ENCODE measurements at regions of chr6 and their contacts with region 1.

Region 1: DNA sequence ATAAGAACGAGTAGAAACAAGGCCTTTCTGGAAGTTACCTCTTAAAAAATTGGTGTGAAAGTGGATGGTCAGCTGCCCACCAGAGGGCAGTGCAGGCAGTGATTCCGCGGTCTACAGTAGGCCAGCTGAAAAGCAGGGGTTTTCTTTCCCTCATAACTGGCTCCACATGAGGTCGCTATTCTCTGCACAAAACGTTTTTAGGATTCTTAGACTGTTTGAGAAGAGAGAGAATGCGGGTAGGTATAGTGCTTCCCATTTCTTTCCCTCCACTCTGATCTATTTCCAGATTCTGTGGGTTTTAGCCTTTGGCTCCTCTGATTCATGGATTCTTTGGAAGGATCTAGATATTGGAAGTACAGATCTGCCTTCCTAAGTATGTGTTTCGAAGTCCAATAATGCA is 14.2 kb downstream of the FIG4 start:
- DNase-seq: peak; percentile 78
- ATAC-seq: peak; percentile 99
- H3K4me3 ChIP-seq: no peak overlapping the region
- H3K27ac ChIP-seq: no peak overlapping the region
- H3K4me1 ChIP-seq: peaks cover 0 to 3% of the 10 kb centered on the region in 2 experiments; a peak in 1 of 4 replicates
- H3K27me3 ChIP-seq: no peaks in the 10 kb centered on the region
- CTCF ChIP-seq: peak; percentile 92 to 100 (median 100)
- POLR2A ChIP-seq: no peak
- RAD21 ChIP-seq: peak; percentile 100

Region 2: GRCh38 chr6:109526905-109527628 is 178.2 kb before region 1 on chr6:
- CTCF ChIA-PET with region 1: no interaction called
- POLR2A ChIA-PET with region 1: no interaction called
- RAD21 ChIA-PET with region 1: no interaction called
- intact Hi-C with region 1: loop called (anchors 1 kb)
- DNase-seq: peak; percentile 69
- ATAC-seq: peak; percentile 96
- H3K4me3 ChIP-seq: no peak overlapping the region
- H3K27ac ChIP-seq: no peak overlapping the region
- H3K4me1 ChIP-seq: no peaks in the 10 kb centered on the region
- H3K27me3 ChIP-seq: no peaks in the 10 kb centered on the region
- CTCF ChIP-seq: peak; percentile 58 to 80 (median 78)
- POLR2A ChIP-seq: no peak
- RAD21 ChIP-seq: peak; percentile 86

Region 3: GRCh38 chr6:109892436-109893435 is 187.5 kb after region 1 on chr6:
- CTCF ChIA-PET with region 1: interaction called, 3 read pairs
- POLR2A ChIA-PET with region 1: no interaction called
- RAD21 ChIA-PET with region 1: no interaction called
- intact Hi-C with region 1: loop called (anchors 2 kb)
- DNase-seq: peak; percentile 82
- ATAC-seq: peak; percentile 84
- H3K4me3 ChIP-seq: peak overlapping the region; percentile 20 to 35
- H3K27ac ChIP-seq: peak overlapping the region; percentile 40
- H3K4me1 ChIP-seq: peaks cover 14 to 32% of the 10 kb centered on the region in 2 experiments
- H3K27me3 ChIP-seq: no peaks in the 10 kb centered on the region
- CTCF ChIP-seq: peak; percentile 53 to 73 (median 60)
- POLR2A ChIP-seq: no peak
- RAD21 ChIP-seq: peak; percentile 85

Region 4: GRCh38 chr6:109998159-109998785 is 293.0 kb after region 1 on chr6:
- CTCF ChIA-PET with region 1: no interaction called
- POLR2A ChIA-PET with region 1: no interaction called
- RAD21 ChIA-PET with region 1: no interaction called
- intact Hi-C with region 1: no loop called
- DNase-seq: no peak
- ATAC-seq: no peak
- H3K4me3 ChIP-seq: no peak overlapping the region
- H3K27ac ChIP-seq: no peak overlapping the region
- H3K4me1 ChIP-seq: no peaks in the 10 kb centered on the region
- H3K27me3 ChIP-seq: peaks cover 18% of the 10 kb centered on the region
- CTCF ChIP-seq: no peak
- POLR2A ChIP-seq: no peak
- RAD21 ChIP-seq: no peak

Region 5: DNA sequence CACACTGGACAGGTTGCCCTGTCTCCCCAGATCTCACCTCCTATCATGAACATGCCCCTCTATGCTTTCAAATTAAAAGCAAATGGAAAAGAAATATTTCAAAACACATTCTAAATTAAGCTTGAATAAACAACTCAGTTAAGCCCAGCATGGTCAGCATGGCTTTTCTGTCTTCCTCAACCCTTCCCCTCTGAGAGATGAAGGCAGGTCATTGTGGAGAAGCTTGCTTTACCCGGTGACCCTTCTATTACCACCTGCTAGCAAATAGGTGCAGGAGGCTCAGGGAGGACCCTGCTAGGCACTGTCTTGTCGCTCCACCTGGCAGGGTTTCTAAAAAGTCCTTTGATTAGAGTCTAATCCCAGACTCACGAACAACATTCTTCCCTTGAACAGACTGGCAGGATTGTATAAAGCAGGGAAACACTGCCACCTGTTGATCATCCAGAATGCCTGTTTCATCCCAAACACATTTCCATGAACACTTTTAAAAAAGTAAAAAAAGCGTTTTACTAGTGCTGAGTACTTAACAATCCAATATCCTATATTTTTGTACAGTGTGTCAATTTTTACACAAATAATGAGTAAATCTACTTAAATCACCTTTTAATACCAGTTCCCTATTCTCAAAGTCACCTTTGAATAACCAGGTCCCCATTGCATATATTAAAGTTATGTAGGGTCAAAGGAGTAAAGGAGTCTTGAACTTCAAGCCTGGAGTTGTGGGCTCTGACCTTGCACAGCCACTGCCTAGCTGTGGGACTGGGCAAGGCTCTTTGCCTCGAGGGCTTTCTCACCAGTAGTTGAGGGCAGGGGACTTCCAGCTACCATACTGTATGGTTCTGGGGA is 348.4 kb after region 1 on chr6:
- CTCF ChIA-PET with region 1: interaction called, 11 read pairs
- POLR2A ChIA-PET with region 1: no interaction called
- RAD21 ChIA-PET with region 1: no interaction called
- intact Hi-C with region 1: loop called (anchors 1 kb)
- DNase-seq: peak; percentile 40
- ATAC-seq: peak; percentile 81
- H3K4me3 ChIP-seq: no peak overlapping the region
- H3K27ac ChIP-seq: no peak overlapping the region
- H3K4me1 ChIP-seq: no peaks in the 10 kb centered on the region
- H3K27me3 ChIP-seq: peaks cover 4% of the 10 kb centered on the region; the same call in 1 of the 2 replicates
- CTCF ChIP-seq: peak; percentile 73 to 87 (median 82)
- POLR2A ChIP-seq: no peak
- RAD21 ChIP-seq: peak; percentile 86

Measured in HCT116 (cell line).